ENCODE measurements at regions of chr5 and their contacts with region 1.

Region 1: DNA sequence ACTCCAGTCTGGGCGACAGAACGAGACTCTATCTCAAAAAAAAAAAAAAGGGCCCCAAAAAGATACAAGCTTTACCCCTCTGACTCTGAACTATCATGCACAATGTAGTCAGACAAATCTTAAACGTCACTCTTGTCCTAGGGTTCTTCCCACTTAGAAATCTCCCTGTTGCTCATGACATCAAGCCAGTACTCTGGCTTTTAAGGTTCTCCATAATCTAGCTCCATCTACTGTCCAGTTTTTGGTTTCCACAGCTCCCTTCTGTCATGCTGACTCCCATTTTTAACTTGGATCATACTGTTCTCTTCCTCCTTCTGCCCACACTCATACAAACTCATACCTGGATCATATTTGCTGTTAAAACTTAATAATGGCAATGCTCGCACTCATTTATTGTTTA is 156.7 kb upstream of the TLX3 start:
- DNase-seq: peak; percentile 47
- H3K4me3 Mint-ChIP-seq: no peak overlapping the region
- H3K27ac Mint-ChIP-seq: no peak overlapping the region
- H3K4me1 Mint-ChIP-seq: no peaks in the 10 kb centered on the region
- H3K27me3 Mint-ChIP-seq: no peaks in the 10 kb centered on the region
- CTCF ChIP-seq: no peak

Region 2: DNA sequence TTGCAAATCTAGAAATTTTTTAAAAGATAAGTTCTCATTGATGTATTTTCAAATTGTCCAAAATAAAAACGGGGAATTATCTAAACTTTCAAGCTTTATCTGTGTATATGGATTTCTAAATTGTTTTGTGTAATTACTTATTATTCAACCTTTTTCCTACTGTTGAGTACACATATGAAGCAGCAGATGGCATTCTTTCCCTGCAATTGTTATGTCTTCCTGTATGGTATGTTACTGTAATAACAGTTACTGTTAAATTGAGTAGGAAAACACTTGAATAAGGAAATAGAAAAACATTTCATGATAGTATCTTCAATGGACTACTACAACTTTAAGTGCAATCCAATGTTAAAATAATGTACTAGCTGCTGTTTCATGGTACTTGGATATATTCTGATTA is 165.8 kb before region 1 on chr5:
- CTCF ChIA-PET with region 1: interaction called, 6 read pairs
- POLR2A ChIA-PET with region 1: no interaction called
- intact Hi-C with region 1: loop called (anchors 1 kb)
- DNase-seq: peak; percentile 48
- H3K4me3 Mint-ChIP-seq: no peak overlapping the region
- H3K27ac Mint-ChIP-seq: no peak overlapping the region
- H3K4me1 Mint-ChIP-seq: peaks cover 12% of the 10 kb centered on the region
- H3K27me3 Mint-ChIP-seq: no peaks in the 10 kb centered on the region
- CTCF ChIP-seq: peak; percentile 33

Region 3: DNA sequence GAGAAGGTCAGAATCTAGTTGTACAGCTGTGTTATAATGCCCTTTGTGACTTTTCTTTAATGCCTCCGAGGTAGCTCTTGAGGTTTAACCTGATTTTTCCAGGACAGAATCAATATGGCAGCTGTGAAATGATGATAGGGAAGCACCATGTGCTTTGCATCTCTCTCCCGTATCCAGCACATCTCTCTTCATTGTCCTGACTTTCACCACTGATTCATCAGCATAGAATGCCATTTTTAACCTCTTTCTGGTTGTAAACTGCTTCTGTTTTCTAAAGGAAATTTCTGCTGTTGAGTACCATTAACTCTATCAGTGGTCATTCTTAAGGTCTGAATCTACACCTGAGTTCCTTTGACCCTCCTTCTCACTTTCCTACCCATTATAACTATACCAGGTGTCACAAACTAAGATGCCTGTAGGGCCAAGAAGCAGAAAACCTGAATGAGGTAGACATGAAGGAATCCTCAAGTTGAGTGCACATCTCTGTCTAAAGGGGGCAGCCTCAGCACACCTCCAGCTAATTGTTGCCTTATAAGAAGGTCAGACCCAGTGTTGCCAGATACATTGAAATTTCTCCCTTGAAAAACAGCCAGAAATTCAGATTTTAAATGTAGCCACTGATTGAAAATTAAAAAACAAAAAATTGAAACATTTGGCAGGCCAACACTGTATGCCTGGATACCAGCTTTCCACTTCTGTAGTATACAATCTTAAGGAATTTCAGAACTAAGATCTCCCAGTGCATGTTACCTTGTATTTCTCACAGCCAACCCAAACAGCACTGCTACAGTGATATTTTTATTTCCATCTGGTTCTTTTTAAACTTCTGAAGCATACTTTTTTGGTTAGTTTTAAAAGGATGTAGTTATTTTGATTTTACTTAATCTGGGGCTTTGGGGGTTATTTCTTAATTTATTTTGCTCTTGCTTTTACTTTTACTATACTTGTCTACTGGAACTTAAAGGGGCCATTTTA is 120.9 kb after region 1 on chr5:
- CTCF ChIA-PET with region 1: no interaction called
- POLR2A ChIA-PET with region 1: no interaction called
- intact Hi-C with region 1: no loop called
- DNase-seq: peak; percentile 49
- H3K4me3 Mint-ChIP-seq: no peak overlapping the region
- H3K27ac Mint-ChIP-seq: no peak overlapping the region
- H3K4me1 Mint-ChIP-seq: peaks cover 21% of the 10 kb centered on the region
- H3K27me3 Mint-ChIP-seq: no peaks in the 10 kb centered on the region
- CTCF ChIP-seq: peak; percentile 32

Measured in MCF 10A (cell line).